ENCODE measurements at regions of chr11 and their contacts with region 1.

Region 1: GRCh38 chr11:4607781-4608666 is at the start of gene TRIM68:
- DNase-seq: peak; percentile 89
- ATAC-seq: peak; percentile 99
- H3K4me3 ChIP-seq: peak within 1 kb of the TSS; percentile 67 to 80
- H3K27ac ChIP-seq: peak within 1 kb of the TSS; percentile 56
- H3K4me1 ChIP-seq: peaks cover 0 to 15% of the 10 kb centered on the region in 2 experiments; a peak in 2 of 4 replicates
- H3K27me3 ChIP-seq: no peaks in the 10 kb centered on the region
- CTCF ChIP-seq: no peak
- POLR2A ChIP-seq: peak; percentile 71
- RAD21 ChIP-seq: no peak
- total RNA-seq, gene TRIM68: 8.3 TPM

Region 2: GRCh38 chr11:4589017-4589416 is 19.0 kb before region 1 on chr11:
- CTCF ChIA-PET with region 1: no interaction called
- POLR2A ChIA-PET with region 1: no interaction called
- RAD21 ChIA-PET with region 1: no interaction called
- intact Hi-C with region 1: no loop called
- DNase-seq: no peak
- ATAC-seq: no peak
- H3K4me3 ChIP-seq: no peak overlapping the region
- H3K27ac ChIP-seq: no peak overlapping the region
- H3K4me1 ChIP-seq: no peaks in the 10 kb centered on the region
- H3K27me3 ChIP-seq: peaks cover 49% of the 10 kb centered on the region
- CTCF ChIP-seq: no peak
- POLR2A ChIP-seq: no peak
- RAD21 ChIP-seq: no peak

Region 3: DNA sequence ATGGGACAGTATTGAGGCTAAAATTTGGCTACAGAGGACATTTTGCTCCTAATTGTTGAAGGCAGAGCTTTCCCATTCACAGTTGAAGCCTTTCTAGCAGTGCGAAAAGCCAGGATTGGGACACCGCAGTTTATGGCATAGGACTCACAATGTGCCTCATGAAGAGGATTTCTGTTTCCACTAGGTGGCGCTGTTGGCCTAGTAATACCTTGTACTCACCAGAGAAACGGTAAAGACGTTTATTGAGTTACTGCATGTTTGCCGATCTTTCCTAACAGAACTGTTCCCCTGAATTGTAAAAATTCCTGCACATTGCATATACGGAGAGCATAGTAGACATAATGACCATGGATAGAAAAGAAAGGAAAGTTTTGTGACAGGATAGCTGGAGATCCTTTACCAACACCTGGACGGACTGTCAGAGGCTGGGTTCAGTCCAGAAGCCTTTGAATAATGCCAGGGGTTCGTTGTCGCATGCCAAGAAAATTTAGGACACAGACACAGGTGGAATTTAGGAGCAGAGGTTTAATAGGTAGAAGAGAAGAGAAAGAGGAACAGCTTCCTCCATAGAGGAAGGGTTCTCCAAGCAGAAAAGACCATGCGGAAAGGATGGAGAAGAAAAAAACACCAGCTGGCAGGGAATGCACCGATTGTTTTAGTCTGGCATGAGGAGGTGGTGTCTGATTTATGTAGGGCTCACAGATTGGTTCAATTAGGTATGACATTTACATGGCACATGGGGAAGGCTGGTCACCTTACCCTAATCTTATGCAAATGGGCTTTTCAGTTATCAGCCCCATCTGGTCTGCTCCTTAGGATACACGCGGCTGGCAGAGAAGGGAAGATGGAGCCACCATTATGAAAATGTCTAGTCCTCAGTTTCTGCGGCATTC is 18.4 kb after region 1 on chr11:
- CTCF ChIA-PET with region 1: no interaction called
- POLR2A ChIA-PET with region 1: no interaction called
- RAD21 ChIA-PET with region 1: no interaction called
- intact Hi-C with region 1: no loop called
- DNase-seq: peak; percentile 75
- ATAC-seq: peak; percentile 95
- H3K4me3 ChIP-seq: no peak overlapping the region
- H3K27ac ChIP-seq: no peak overlapping the region
- H3K4me1 ChIP-seq: no peaks in the 10 kb centered on the region
- H3K27me3 ChIP-seq: peaks cover 12% of the 10 kb centered on the region; the same call in 1 of the 2 replicates
- CTCF ChIP-seq: peak; percentile 62 to 83 (median 70)
- POLR2A ChIP-seq: no peak
- RAD21 ChIP-seq: peak; percentile 80

Region 4: DNA sequence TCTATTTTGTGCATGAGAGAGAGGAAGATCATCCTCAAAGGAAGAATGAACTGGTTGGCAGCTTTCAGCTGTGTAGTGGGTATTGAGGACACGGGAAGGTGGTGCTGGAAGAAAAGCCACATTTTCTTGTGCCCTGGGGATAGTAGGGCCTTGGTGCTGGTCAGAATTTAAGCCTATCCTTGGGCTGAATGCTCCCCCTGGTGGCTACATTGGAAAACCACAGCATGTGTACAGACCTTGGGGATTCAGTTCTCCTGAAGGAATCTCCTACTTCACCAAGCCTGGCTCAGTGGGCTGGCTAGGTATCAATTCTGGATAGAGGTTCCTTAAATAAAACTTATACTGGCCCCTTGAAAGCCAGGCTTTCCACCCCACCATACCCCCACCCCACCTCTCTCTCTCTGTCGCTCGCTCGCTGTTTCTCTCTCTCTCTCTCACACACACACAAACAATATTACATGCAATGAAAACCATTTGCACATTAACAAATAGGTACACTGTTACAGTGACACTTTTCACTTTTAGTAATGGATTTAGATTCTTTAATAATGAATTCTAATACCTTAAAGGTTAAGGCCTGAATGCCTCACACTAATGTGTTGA is 772.8 kb after region 1 on chr11:
- CTCF ChIA-PET with region 1: no interaction called
- POLR2A ChIA-PET with region 1: no interaction called
- RAD21 ChIA-PET with region 1: no interaction called
- intact Hi-C with region 1: loop called (anchors 10 kb)
- DNase-seq: peak; percentile 36
- ATAC-seq: peak; percentile 92
- H3K4me3 ChIP-seq: no peak overlapping the region
- H3K27ac ChIP-seq: no peak overlapping the region; the same call in 1 of the 2 replicates
- H3K4me1 ChIP-seq: peaks cover 0 to 16% of the 10 kb centered on the region in 2 experiments; a peak in 1 of 4 replicates
- H3K27me3 ChIP-seq: no peaks in the 10 kb centered on the region
- CTCF ChIP-seq: peak; percentile 45 to 82 (median 78); a peak in 5 of 6 replicates
- POLR2A ChIP-seq: no peak
- RAD21 ChIP-seq: peak; percentile 64